Activated T-helper 1 cell treated with anti-CD3 and anti-CD28 coated beads, Interleukin-12 subunit alpha, Interleukin-12 subunit beta, Interleukin-2, Interleukin-4 antibody, amounts not matched to agents 30 ng/mL and 10 ng/mL and 1 ng/mL, durations not matched to agents 14 hours and 24 hours and 36 hours (primary cell): ENCODE measurements at regions of chr18 and their contacts with region 1.

Region 1: GRCh38 chr18:32552421-32553030 is 81.8 kb upstream of the GAREM1 start:
- DNase-seq: peak; percentile 16
- H3K4me3 Mint-ChIP-seq: no peak overlapping the region
- H3K27ac Mint-ChIP-seq: no peak overlapping the region
- H3K4me1 Mint-ChIP-seq: no peaks in the 10 kb centered on the region
- H3K27me3 Mint-ChIP-seq: peaks cover 8% of the 10 kb centered on the region

Region 2: GRCh38 chr18:32158108-32158624 is 394.4 kb before region 1 on chr18:
- intact Hi-C with region 1: loop called (anchors 1 kb)
- DNase-seq: peak; percentile 52
- H3K4me3 Mint-ChIP-seq: peak overlapping the region; percentile 62
- H3K27ac Mint-ChIP-seq: no peak overlapping the region
- H3K4me1 Mint-ChIP-seq: peaks cover 8% of the 10 kb centered on the region
- H3K27me3 Mint-ChIP-seq: peaks cover 4% of the 10 kb centered on the region

Region 3: DNA sequence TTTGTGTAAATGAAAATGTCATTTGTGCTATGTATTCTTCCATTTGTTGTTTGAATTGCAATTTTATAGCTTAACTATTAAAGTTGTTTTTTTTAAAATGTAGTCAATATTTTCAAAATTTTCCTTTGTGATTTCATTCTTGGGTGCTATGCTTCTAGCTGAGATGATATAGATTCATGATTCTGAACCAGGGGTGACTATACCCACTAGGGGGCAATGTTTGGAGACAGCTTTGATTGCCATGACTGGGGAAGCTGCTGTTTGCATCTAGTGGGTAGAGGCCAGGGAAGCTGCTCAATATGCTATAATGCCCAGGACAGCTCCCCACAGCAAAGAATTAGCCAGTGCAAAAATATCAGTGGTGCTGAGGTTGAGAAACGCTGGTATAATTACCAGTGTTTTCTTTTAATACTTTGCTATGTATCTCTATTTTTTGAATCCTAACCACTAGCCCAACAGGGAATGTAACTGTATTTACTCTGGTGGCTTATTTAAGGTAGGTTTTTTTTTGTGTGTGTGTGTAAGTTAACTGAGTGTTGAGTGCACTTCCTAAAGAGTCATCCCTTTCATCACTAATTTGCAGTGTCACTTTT is 262.9 kb before region 1 on chr18:
- intact Hi-C with region 1: loop called (anchors 5 kb)
- DNase-seq: no peak
- H3K4me3 Mint-ChIP-seq: no peak overlapping the region
- H3K27ac Mint-ChIP-seq: no peak overlapping the region
- H3K4me1 Mint-ChIP-seq: no peaks in the 10 kb centered on the region
- H3K27me3 Mint-ChIP-seq: no peaks in the 10 kb centered on the region